Mammary epithelial cell (primary cell): ENCODE measurements at regions of chr15 and their contacts with region 1.

Region 1: GRCh38 chr15:98896802-98897732 is 110.5 kb downstream of the PGPEP1L start:
- DNase-seq: peak; percentile 100
- H3K4me3 ChIP-seq: no peak overlapping the region
- H3K27ac ChIP-seq: peak overlapping the region; percentile 91
- H3K4me1 ChIP-seq: peaks cover 41% of the 10 kb centered on the region
- H3K27me3 ChIP-seq: no peaks in the 10 kb centered on the region
- CTCF ChIP-seq: no peak

Region 2: GRCh38 chr15:98873441-98874201 is 23.4 kb before region 1 on chr15:
- CTCF ChIA-PET with region 1: no interaction called
- dilution Hi-C with region 1: no loop called
- in situ Hi-C with region 1: no loop called
- intact Hi-C with region 1: loop called (anchors 2 kb)
- DNase-seq: peak; percentile 90
- H3K4me3 ChIP-seq: peak overlapping the region; percentile 19 to 36 (median 25)
- H3K27ac ChIP-seq: peak overlapping the region; percentile 90
- H3K4me1 ChIP-seq: peaks cover 44% of the 10 kb centered on the region
- H3K27me3 ChIP-seq: no peaks in the 10 kb centered on the region
- CTCF ChIP-seq: no peak

Region 3: GRCh38 chr15:98943601-98944151 is 46.6 kb after region 1 on chr15:
- CTCF ChIA-PET with region 1: no interaction called
- dilution Hi-C with region 1: no loop called
- in situ Hi-C with region 1: no loop called
- intact Hi-C with region 1: no loop called
- DNase-seq: no peak
- H3K4me3 ChIP-seq: no peak overlapping the region
- H3K27ac ChIP-seq: no peak overlapping the region
- H3K4me1 ChIP-seq: no peaks in the 10 kb centered on the region
- H3K27me3 ChIP-seq: no peaks in the 10 kb centered on the region
- CTCF ChIP-seq: no peak